IMR-90 (cell line): ENCODE measurements at regions of chr13 and their contacts with region 1.

Region 1: DNA sequence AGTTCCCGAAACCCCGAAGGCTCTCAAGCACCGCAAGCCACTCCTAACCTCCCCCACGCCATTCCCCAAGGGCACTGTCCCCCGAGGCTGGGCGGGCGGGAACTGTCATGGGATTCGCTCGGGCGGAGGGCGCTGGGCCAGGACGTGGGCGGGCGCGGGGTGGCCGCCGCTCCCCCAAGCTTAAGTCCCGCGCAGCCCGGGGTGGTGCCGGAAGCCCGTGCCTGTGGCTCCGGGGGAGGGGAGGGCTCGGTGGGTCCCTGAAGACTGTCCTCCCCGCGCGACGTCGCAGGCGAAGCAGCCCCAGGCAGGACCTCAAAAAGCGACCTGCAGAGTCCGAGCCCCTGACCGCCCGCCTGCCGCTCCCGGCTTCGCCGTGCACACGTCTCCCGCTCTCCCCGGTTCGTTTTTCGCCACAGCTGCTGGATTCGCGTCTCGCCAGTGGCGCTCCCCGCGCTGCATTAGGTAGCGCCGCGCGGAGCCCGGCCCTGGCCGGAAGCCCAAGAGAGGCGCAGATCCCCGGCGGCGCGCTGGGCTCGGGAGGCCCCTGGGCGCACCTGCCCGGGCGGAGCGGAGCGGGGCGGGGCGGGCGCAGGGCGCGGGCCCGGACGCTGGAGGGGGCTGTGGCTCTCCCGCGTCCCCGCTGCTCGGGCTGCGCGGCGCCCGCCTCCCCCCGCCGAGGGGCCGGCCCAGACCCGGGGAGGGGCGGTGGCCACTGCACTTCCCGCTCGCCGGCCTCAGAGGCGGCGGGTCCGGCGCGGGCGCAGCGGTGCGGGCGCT is at the start of gene FARP1:
- DNase-seq: peak; percentile 65
- ATAC-seq: peak; percentile 89
- H3K4me3 ChIP-seq: peak within 1 kb of the TSS; percentile 95
- H3K27ac ChIP-seq: peak within 1 kb of the TSS; percentile 90
- H3K4me1 ChIP-seq: peaks cover 8% of the 10 kb centered on the region
- H3K27me3 ChIP-seq: no peaks in the 10 kb centered on the region; the same call in 1 of the 2 replicates
- CTCF ChIP-seq: peak; percentile 66
- POLR2A ChIP-seq: 0 out of 2 replicates have a peak, but pooled peaks have one; percentile 24
- RAD21 ChIP-seq: peak; percentile 75
- total RNA-seq, gene FARP1: 48.3 and 57.0 TPM in 2 replicates

Region 2: GRCh38 chr13:97855570-97856303 is 286.8 kb before region 1 on chr13:
- CTCF ChIA-PET with region 1: no interaction called
- POLR2A ChIA-PET with region 1: no interaction called
- dilution Hi-C with region 1: no loop called
- in situ Hi-C with region 1: loop called (anchors 10 kb)
- intact Hi-C with region 1: loop called (anchors 5 kb)
- DNase-seq: peak; percentile 86
- ATAC-seq: peak; percentile 88
- H3K4me3 ChIP-seq: no peak overlapping the region
- H3K27ac ChIP-seq: no peak overlapping the region
- H3K4me1 ChIP-seq: peaks cover 6% of the 10 kb centered on the region
- H3K27me3 ChIP-seq: no peaks in the 10 kb centered on the region
- CTCF ChIP-seq: peak; percentile 89
- POLR2A ChIP-seq: peak; percentile 39; the same call in 1 of the 2 replicates
- RAD21 ChIP-seq: peak; percentile 99

Region 3: GRCh38 chr13:98173431-98174152 is 31.0 kb after region 1 on chr13:
- CTCF ChIA-PET with region 1: no interaction called
- POLR2A ChIA-PET with region 1: no interaction called
- dilution Hi-C with region 1: no loop called
- in situ Hi-C with region 1: no loop called
- intact Hi-C with region 1: loop called (anchors 2 kb)
- DNase-seq: peak; percentile 99
- ATAC-seq: peak; percentile 76
- H3K4me3 ChIP-seq: no peak overlapping the region
- H3K27ac ChIP-seq: peak overlapping the region; percentile 87
- H3K4me1 ChIP-seq: peaks cover 37% of the 10 kb centered on the region
- H3K27me3 ChIP-seq: no peaks in the 10 kb centered on the region
- CTCF ChIP-seq: no peak
- POLR2A ChIP-seq: 0 out of 2 replicates have a peak, but pooled peaks have one; percentile 28
- RAD21 ChIP-seq: 0 out of 2 replicates have a peak, but pooled peaks have one; percentile 10

Region 4: GRCh38 chr13:98252931-98253470 is 110.4 kb after region 1 on chr13:
- CTCF ChIA-PET with region 1: no interaction called
- POLR2A ChIA-PET with region 1: no interaction called
- dilution Hi-C with region 1: no loop called
- in situ Hi-C with region 1: no loop called
- intact Hi-C with region 1: loop called (anchors 10 kb)
- DNase-seq: peak; percentile 88
- ATAC-seq: peak; percentile 76
- H3K4me3 ChIP-seq: no peak overlapping the region
- H3K27ac ChIP-seq: peak overlapping the region; percentile 61
- H3K4me1 ChIP-seq: peaks cover 17% of the 10 kb centered on the region
- H3K27me3 ChIP-seq: no peaks in the 10 kb centered on the region
- CTCF ChIP-seq: no peak
- POLR2A ChIP-seq: no peak
- RAD21 ChIP-seq: no peak; the same call in 1 of the 2 replicates

Region 5: GRCh38 chr13:98370806-98371515 is 228.4 kb after region 1 on chr13:
- CTCF ChIA-PET with region 1: no interaction called
- POLR2A ChIA-PET with region 1: no interaction called
- dilution Hi-C with region 1: no loop called
- in situ Hi-C with region 1: no loop called
- intact Hi-C with region 1: loop called (anchors 5 kb)
- DNase-seq: peak; percentile 97
- ATAC-seq: peak; percentile 82
- H3K4me3 ChIP-seq: no peak overlapping the region
- H3K27ac ChIP-seq: peak overlapping the region; percentile 98
- H3K4me1 ChIP-seq: peaks cover 26% of the 10 kb centered on the region
- H3K27me3 ChIP-seq: no peaks in the 10 kb centered on the region
- CTCF ChIP-seq: no peak
- POLR2A ChIP-seq: no peak
- RAD21 ChIP-seq: peak; percentile 24; the same call in 1 of the 2 replicates

Region 6: GRCh38 chr13:98653463-98653985 is 511.0 kb after region 1 on chr13:
- CTCF ChIA-PET with region 1: no interaction called
- POLR2A ChIA-PET with region 1: no interaction called
- dilution Hi-C with region 1: no loop called
- in situ Hi-C with region 1: loop called (anchors 25 kb)
- intact Hi-C with region 1: no loop called
- DNase-seq: peak; percentile 71
- ATAC-seq: peak; percentile 100
- H3K4me3 ChIP-seq: no peak overlapping the region
- H3K27ac ChIP-seq: no peak overlapping the region
- H3K4me1 ChIP-seq: no peaks in the 10 kb centered on the region
- H3K27me3 ChIP-seq: peaks cover 2% of the 10 kb centered on the region; the same call in 1 of the 2 replicates
- CTCF ChIP-seq: peak; percentile 87
- POLR2A ChIP-seq: no peak
- RAD21 ChIP-seq: peak; percentile 85

Region 7: DNA sequence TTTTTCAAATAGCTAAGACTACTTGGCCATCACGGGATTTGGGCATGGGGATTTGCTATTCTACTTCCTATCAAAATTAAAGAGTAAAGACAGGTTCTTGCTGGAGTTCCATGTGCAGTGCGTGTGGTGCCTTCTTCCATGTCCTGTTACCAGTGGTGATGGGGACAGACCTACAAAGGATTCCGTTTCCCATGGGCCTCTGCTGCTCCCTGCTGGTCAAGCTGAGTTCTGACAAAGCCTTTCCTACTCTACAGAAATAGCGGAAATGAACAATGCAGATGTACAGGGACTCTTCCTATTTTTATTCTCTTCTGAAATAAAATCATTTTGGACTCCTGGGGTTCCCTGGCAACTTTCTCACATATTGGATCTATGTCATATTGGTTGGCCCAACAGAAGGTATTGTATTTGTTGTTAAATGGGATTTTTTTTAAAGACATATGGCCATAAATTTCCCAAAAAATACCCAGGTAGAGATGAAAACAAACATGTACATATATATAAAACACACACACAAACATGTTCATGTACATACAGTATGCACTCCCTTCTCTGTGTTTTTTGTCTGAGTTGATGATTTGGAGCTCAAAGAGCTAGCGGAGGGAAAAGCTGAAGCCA is 700.4 kb after region 1 on chr13:
- CTCF ChIA-PET with region 1: no interaction called
- POLR2A ChIA-PET with region 1: no interaction called
- dilution Hi-C with region 1: no loop called
- in situ Hi-C with region 1: loop called (anchors 25 kb)
- intact Hi-C with region 1: no loop called
- DNase-seq: peak; percentile 80
- ATAC-seq: peak; percentile 89
- H3K4me3 ChIP-seq: no peak overlapping the region
- H3K27ac ChIP-seq: no peak overlapping the region
- H3K4me1 ChIP-seq: peaks cover 4% of the 10 kb centered on the region; the same call in 1 of the 2 replicates
- H3K27me3 ChIP-seq: no peaks in the 10 kb centered on the region
- CTCF ChIP-seq: peak; percentile 88
- POLR2A ChIP-seq: no peak
- RAD21 ChIP-seq: peak; percentile 89